ENCODE measurements at regions of chr5 and their contacts with region 1.

Region 1: DNA sequence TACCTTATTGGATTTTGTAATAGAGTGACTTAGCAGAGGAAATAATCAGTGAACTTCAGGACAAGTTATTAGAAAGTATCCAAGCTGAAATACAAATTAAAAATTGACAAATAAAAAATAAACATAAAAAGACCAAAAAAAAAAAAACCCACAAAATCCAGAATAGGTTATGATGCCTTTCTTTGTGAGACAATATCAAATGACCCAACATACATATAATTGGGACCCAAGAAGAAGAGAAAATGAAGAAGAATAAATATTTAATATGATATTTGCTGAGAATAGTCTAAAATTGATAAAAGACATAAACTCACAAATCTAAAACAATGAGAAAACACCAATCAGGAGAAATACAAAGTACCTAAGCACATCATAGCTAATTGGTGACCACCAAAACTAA is 81.8 kb downstream of the ICE1 start:
- DNase-seq: no peak
- H3K4me3 ChIP-seq: no peak overlapping the region
- H3K27ac ChIP-seq: no peak overlapping the region
- H3K4me1 ChIP-seq: no peaks in the 10 kb centered on the region
- H3K27me3 ChIP-seq: no peaks in the 10 kb centered on the region
- CTCF ChIP-seq: no peak
- EP300 ChIP-seq: no peak
- POLR2A ChIP-seq: no peak

Region 2: GRCh38 chr5:5551499-5551898 is 47.2 kb after region 1 on chr5:
- intact Hi-C with region 1: no loop called
- DNase-seq: no peak
- H3K4me3 ChIP-seq: no peak overlapping the region
- H3K27ac ChIP-seq: no peak overlapping the region
- H3K4me1 ChIP-seq: no peaks in the 10 kb centered on the region
- H3K27me3 ChIP-seq: no peaks in the 10 kb centered on the region
- CTCF ChIP-seq: no peak
- EP300 ChIP-seq: no peak
- POLR2A ChIP-seq: no peak

Region 3: DNA sequence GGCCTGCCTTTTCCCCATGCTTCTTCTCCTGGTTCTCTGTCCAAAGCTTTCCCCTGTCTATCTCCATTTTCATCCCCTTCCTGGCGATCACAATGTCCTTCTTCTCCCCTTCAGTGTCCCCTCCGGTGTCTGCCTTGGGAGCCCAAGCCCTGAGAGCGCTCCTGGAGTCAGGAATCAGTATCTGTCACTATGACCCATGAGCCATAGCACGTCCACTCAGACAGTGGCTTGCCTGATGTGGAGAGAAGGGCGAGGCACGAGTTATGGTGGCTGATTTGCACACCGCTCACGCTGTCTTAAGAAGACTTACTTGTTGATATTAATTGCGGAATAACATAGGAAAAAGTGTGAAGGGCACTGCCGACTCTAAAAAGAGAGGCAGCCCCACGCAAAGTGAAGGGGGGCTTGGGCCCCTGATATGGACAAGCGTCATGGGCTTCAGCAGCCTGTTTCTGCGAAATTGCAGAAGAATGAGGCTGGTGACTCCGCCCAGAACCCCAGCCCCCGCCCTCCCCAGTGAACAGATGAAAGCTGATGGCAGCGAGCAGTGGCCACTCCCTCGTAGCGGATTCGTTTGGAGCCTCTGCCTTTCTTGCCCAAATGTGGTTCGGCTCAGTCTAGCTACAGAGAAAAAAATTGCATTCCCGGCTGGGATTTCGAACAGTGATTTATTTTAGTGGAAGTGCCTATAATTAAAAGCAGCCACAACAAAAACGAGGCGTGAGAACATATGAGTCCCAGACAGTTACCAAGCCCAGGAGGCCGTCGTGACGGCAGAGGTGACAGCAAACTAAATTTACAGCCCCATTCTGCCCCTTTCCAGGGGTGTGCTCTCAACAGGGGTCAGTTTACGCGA is 67.9 kb after region 1 on chr5:
- intact Hi-C with region 1: loop called (anchors 5 kb)
- DNase-seq: peak; percentile 80
- H3K4me3 ChIP-seq: peak overlapping the region in 3 of 4 donors; percentile 7 to 32 (median 26)
- H3K27ac ChIP-seq: peak overlapping the region; percentile 74 to 87 (median 80)
- H3K4me1 ChIP-seq: peaks cover 0 to 36% (median 27%) of the 10 kb centered on the region in 4 donors
- H3K27me3 ChIP-seq: no peaks in the 10 kb centered on the region
- CTCF ChIP-seq: no peak
- EP300 ChIP-seq: no peak
- POLR2A ChIP-seq: no peak

Measured in sigmoid colon (tissue), 7 donors.